Endothelial cell of umbilical vein (primary cell): ENCODE measurements at regions of chr19 and their contacts with region 1.

Region 1: GRCh38 chr19:54029930-54030490 is 33.7 kb downstream of the VSTM1 start:
- DNase-seq: peak; percentile 67
- H3K4me3 ChIP-seq: no peak overlapping the region
- H3K27ac ChIP-seq: no peak overlapping the region
- H3K4me1 ChIP-seq: peaks cover 4% of the 10 kb centered on the region
- H3K27me3 ChIP-seq: no peaks in the 10 kb centered on the region
- CTCF ChIP-seq: peak; percentile 61 to 72
- POLR2A ChIP-seq: no peak

Region 2: DNA sequence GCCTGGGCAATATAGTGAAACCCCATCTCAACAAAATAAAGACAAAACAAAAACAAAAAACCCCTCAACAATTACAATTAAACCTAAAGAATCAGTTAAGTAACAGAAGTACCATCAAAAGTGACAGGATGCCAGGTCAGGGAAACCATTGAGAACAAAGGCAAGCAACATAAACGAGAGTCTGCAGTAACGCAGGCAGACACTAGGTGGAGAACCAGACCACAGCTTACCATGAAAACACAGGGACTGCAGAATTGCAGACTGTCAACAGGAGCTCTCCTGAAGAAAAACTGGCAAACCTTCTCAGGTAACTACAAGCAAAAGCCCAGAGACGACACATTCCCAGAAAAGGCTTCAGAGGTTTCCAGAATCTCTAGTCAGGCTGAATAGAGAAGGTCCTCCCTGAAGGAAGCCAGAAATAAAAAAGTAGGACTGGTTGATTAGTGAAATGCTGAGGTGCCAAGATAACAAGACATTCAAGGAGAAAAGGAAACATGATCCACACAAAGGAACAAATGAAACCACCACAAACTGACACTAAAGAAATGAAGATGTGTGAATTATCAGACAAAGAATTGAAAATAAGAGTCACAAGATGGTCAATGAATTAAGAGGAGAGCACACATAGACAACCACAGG is 834.6 kb before region 1 on chr19:
- CTCF ChIA-PET with region 1: interaction called, 4 read pairs
- POLR2A ChIA-PET with region 1: no interaction called
- dilution Hi-C with region 1: no loop called
- intact Hi-C with region 1: loop called (anchors 10 kb)
- DNase-seq: peak; percentile 82
- H3K4me3 ChIP-seq: no peak overlapping the region
- H3K27ac ChIP-seq: no peak overlapping the region
- H3K4me1 ChIP-seq: peaks cover 2% of the 10 kb centered on the region
- H3K27me3 ChIP-seq: no peaks in the 10 kb centered on the region
- CTCF ChIP-seq: peak; percentile 83
- POLR2A ChIP-seq: no peak

Region 3: DNA sequence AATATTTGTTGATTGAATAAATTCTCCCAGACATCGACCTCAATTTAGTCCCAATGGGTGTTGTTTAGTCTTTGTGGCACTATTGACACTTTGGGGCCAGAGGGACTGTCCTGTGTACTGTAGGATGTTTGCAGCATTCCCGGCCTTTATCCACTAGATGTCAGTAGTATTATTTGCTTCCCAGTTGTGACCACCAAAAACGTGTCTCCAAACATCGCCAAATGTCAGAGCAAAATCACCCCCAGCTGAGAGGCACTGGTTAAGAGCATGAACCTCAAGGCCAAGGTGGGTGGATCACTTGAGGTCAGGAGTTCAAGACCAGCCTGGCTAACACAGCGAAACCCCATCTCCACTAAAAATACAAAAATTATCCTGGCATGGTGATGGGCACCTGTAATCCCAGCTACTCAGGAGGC is 221.3 kb before region 1 on chr19:
- CTCF ChIA-PET with region 1: interaction called, 210 read pairs
- POLR2A ChIA-PET with region 1: no interaction called
- dilution Hi-C with region 1: no loop called
- intact Hi-C with region 1: loop called (anchors 1 kb)
- DNase-seq: peak; percentile 47
- H3K4me3 ChIP-seq: no peak overlapping the region
- H3K27ac ChIP-seq: no peak overlapping the region
- H3K4me1 ChIP-seq: peaks cover 10% of the 10 kb centered on the region
- H3K27me3 ChIP-seq: no peaks in the 10 kb centered on the region
- CTCF ChIP-seq: peak; percentile 51 to 59
- POLR2A ChIP-seq: no peak

Region 4: GRCh38 chr19:53867225-53868090 is 162.6 kb before region 1 on chr19 and contains the start of gene MYADM:
- CTCF ChIA-PET with region 1: interaction called, 19 read pairs
- POLR2A ChIA-PET with region 1: no interaction called
- dilution Hi-C with region 1: no loop called
- intact Hi-C with region 1: no loop called
- DNase-seq: peak; percentile 99
- H3K4me3 ChIP-seq: peak within 1 kb of the TSS; percentile 52 to 88 (median 82)
- H3K27ac ChIP-seq: peak within 1 kb of the TSS; percentile 100
- H3K4me1 ChIP-seq: peaks cover 15% of the 10 kb centered on the region
- H3K27me3 ChIP-seq: no peaks in the 10 kb centered on the region
- CTCF ChIP-seq: no peak
- POLR2A ChIP-seq: peak; percentile 54
- total RNA-seq, gene MYADM: 128 and 133 TPM in 2 replicates

Region 5: GRCh38 chr19:53906211-53907192 is 123.5 kb before region 1 on chr19:
- CTCF ChIA-PET with region 1: interaction called, 19 read pairs
- POLR2A ChIA-PET with region 1: no interaction called
- dilution Hi-C with region 1: no loop called
- intact Hi-C with region 1: no loop called
- DNase-seq: no peak
- H3K4me3 ChIP-seq: no peak overlapping the region
- H3K27ac ChIP-seq: no peak overlapping the region
- H3K4me1 ChIP-seq: peaks cover 6% of the 10 kb centered on the region
- H3K27me3 ChIP-seq: peaks cover 31 to 35% of the 10 kb centered on the region in 2 experiments
- CTCF ChIP-seq: peak; percentile 77 to 93
- POLR2A ChIP-seq: no peak

Region 6: GRCh38 chr19:53991224-53992113 is 38.5 kb before region 1 on chr19 and contains the start of gene CACNG6:
- CTCF ChIA-PET with region 1: interaction called, 11 read pairs
- POLR2A ChIA-PET with region 1: interaction called, 4 read pairs
- dilution Hi-C with region 1: no loop called
- intact Hi-C with region 1: no loop called
- DNase-seq: peak; percentile 56
- H3K4me3 ChIP-seq: peak within 1 kb of the TSS; percentile 15 to 26 (median 25)
- H3K27ac ChIP-seq: peak within 1 kb of the TSS; percentile 74
- H3K4me1 ChIP-seq: peaks cover 39% of the 10 kb centered on the region
- H3K27me3 ChIP-seq: no peaks in the 10 kb centered on the region
- CTCF ChIP-seq: no peak
- POLR2A ChIP-seq: peak; percentile 38
- total RNA-seq, gene CACNG6: 4.0 and 5.4 TPM in 2 replicates

Region 7: DNA sequence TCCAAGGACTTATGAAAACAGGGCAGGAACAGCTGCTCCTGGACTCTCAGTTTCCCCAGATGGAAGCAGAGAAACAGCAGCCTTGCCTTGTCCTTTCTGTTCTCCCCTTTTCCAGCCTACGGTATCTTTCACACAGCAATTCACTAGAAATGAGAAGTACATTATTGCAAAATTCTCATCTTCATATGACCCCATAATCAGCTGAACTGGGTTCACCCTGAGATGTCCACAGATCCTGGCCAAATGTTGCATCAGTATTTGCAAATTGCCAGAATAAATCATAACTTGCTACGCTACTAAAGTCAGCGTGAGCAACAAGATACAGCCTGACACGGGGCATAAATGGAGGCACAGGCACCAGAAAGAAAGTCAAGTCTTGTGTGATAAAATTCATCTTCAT is 17.6 kb after region 1 on chr19:
- CTCF ChIA-PET with region 1: interaction called, 44 read pairs
- POLR2A ChIA-PET with region 1: no interaction called
- dilution Hi-C with region 1: no loop called
- intact Hi-C with region 1: no loop called
- DNase-seq: no peak
- H3K4me3 ChIP-seq: no peak overlapping the region
- H3K27ac ChIP-seq: no peak overlapping the region
- H3K4me1 ChIP-seq: no peaks in the 10 kb centered on the region
- H3K27me3 ChIP-seq: peaks cover 19 to 28% of the 10 kb centered on the region in 2 experiments
- CTCF ChIP-seq: no peak
- POLR2A ChIP-seq: no peak

Region 8: DNA sequence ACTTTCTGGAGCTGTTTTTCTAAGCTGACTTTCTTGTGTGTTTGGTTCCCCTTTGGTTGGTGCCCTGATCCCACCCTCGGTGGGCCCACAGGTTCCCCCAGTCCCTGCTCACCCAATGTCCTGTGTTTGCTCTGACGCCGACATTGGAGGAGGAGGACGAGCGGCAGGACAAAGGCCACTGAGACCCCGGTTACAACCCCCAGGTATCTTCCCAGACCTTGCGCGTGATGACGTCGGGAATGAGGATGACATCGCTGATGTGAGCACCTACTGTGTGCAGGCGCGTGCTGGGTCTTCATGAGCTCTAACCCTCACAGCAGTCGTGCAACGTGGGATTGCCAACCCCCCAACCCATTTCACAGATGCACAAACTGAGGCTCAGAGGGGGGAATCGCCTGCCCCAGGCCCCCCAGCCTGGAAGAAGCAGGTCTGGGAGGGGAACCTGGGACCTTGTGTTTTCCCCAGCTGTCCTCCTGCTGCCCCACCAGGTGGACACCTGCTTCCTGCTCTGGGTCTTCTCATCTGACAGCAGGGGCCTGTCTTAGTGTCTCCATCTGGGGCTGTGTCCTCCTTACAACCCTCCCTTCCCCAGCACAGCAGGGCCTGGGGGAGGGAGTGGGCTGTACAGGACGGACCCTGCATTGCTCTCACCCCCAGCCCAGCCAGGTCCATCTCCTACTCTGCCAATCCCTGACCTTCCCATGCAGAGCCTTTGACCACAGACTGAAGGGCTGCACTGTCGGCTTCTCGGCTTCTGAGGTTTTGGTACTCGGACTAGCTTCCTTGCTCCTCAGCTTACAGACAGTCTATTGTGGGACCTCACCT is 217.3 kb after region 1 on chr19:
- CTCF ChIA-PET with region 1: no interaction called
- POLR2A ChIA-PET with region 1: no interaction called
- dilution Hi-C with region 1: no loop called
- intact Hi-C with region 1: no loop called
- DNase-seq: no peak
- H3K4me3 ChIP-seq: peak overlapping the region in 1 of 3 experiments; percentile 14
- H3K27ac ChIP-seq: peak overlapping the region; percentile 68
- H3K4me1 ChIP-seq: peaks cover 19% of the 10 kb centered on the region
- H3K27me3 ChIP-seq: no peaks in the 10 kb centered on the region
- CTCF ChIP-seq: no peak
- POLR2A ChIP-seq: no peak